CD4-positive, alpha-beta memory T cell (primary cell): ENCODE measurements at regions of chr2 and their contacts with region 1.

Region 1: GRCh38 chr2:55718165-55719008 is 24.7 kb upstream of the PNPT1 start:
- DNase-seq: peak in 4 of 5 donors; percentile 27 to 45 (median 29)
- H3K4me3 ChIP-seq: no peak overlapping the region
- H3K4me3 Mint-ChIP-seq: no peak overlapping the region
- H3K27ac ChIP-seq: no peak overlapping the region
- H3K27ac Mint-ChIP-seq: no peak overlapping the region
- H3K4me1 ChIP-seq: no peaks in the 10 kb centered on the region
- H3K4me1 Mint-ChIP-seq: no peaks in the 10 kb centered on the region
- H3K27me3 ChIP-seq: no peaks in the 10 kb centered on the region
- H3K27me3 Mint-ChIP-seq: peaks cover under 1 to 10% of the 10 kb centered on the region in 2 donors

Region 2: DNA sequence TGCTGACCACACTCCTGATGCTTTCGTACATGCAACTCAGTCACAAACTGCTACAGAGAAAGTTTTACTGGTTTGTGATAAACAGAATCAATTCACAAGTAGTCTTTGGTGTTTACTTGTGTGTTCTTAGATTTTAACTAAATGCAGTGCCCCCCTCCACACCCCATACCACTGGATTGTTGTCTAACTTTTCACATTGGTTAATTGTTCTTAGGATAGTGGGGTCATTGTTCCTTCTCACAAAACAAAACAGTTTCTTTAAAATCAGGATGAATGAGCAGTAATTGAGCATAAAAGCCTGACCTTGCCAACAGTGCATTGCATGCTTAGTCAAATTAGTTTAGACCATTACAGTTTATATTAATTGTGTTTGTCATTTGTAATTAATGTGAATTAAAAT is 10.6 kb before region 1 on chr2:
- CTCF ChIA-PET with region 1: interaction called, 17 read pairs
- POLR2A ChIA-PET with region 1: no interaction called
- intact Hi-C with region 1: no loop called
- DNase-seq: no peak
- H3K4me3 ChIP-seq: no peak overlapping the region
- H3K4me3 Mint-ChIP-seq: no peak overlapping the region
- H3K27ac ChIP-seq: no peak overlapping the region
- H3K27ac Mint-ChIP-seq: no peak overlapping the region
- H3K4me1 ChIP-seq: no peaks in the 10 kb centered on the region
- H3K4me1 Mint-ChIP-seq: no peaks in the 10 kb centered on the region
- H3K27me3 ChIP-seq: no peaks in the 10 kb centered on the region
- H3K27me3 Mint-ChIP-seq: peaks cover 5 to 8% of the 10 kb centered on the region in 2 donors

Region 3: GRCh38 chr2:55732854-55733253 is 14.5 kb after region 1 on chr2:
- CTCF ChIA-PET with region 1: interaction called, 22 read pairs
- POLR2A ChIA-PET with region 1: no interaction called
- intact Hi-C with region 1: no loop called
- DNase-seq: no peak
- H3K4me3 ChIP-seq: no peak overlapping the region
- H3K4me3 Mint-ChIP-seq: no peak overlapping the region
- H3K27ac ChIP-seq: no peak overlapping the region
- H3K27ac Mint-ChIP-seq: no peak overlapping the region
- H3K4me1 ChIP-seq: no peaks in the 10 kb centered on the region
- H3K4me1 Mint-ChIP-seq: no peaks in the 10 kb centered on the region
- H3K27me3 ChIP-seq: no peaks in the 10 kb centered on the region
- H3K27me3 Mint-ChIP-seq: no peaks in the 10 kb centered on the region